OCI-LY7 (cell line): ENCODE measurements at regions of chr1 and their contacts with region 1.

Region 1: GRCh38 chr1:1605034-1605591 is 5.2 kb upstream of the FNDC10 start:
- DNase-seq: no peak
- H3K4me3 ChIP-seq: no peak overlapping the region
- H3K27ac ChIP-seq: no peak overlapping the region
- H3K4me1 ChIP-seq: peaks cover 27% of the 10 kb centered on the region
- CTCF ChIP-seq: no peak

Region 2: GRCh38 chr1:1615256-1616044 is 10.3 kb after region 1 on chr1 and contains the start of gene MIB2:
- CTCF ChIA-PET with region 1: no interaction called
- POLR2A ChIA-PET with region 1: interaction called, 4 read pairs
- intact Hi-C with region 1: loop called (anchors 1 kb)
- DNase-seq: peak; percentile 99
- H3K4me3 ChIP-seq: peak within 1 kb of the TSS; percentile 85
- H3K27ac ChIP-seq: peak within 1 kb of the TSS; percentile 87
- H3K4me1 ChIP-seq: peaks cover 26% of the 10 kb centered on the region
- CTCF ChIP-seq: no peak
- total RNA-seq, gene MIB2: 46.4 and 64.9 TPM in 2 replicates

Region 3: DNA sequence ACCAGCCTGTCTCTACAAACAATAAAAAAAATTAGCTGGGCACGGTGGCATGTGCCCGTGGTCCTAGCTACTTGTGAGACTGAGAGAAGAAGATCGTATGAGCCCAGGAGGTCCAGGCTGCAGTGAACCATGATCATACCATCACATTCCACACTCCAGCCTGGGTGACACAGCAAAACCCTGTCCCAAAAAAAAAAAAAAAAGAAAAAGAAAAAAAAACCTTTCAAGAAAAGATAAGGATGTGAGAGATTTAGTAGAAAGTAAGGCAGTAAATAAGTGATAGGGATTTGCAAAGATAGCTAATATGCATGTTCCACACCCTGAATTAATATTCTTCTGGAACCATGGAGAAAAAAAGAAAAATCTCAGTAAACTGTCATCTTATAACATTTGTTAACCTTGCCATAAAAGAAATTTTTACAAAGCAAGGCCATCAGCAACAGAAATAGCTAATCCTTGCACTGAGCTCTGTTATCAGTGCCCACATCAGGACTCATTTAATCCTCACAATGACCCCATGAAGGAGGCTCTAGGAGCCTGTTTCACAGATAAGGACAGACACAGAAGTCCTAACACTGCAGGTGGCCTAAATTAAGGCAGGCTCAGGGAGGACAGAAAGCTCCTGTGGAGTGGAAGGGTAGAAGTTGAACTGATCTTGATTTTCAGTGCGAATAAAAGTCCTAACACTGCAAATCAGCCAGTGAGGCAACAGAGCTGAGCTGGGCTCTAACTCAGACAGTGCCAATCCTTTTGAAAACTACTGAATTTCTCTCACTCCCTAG is 278.2 kb after region 1 on chr1:
- CTCF ChIA-PET with region 1: no interaction called
- POLR2A ChIA-PET with region 1: interaction called, 11 read pairs
- intact Hi-C with region 1: no loop called
- DNase-seq: no peak
- H3K4me3 ChIP-seq: no peak overlapping the region
- H3K27ac ChIP-seq: no peak overlapping the region
- H3K4me1 ChIP-seq: peaks cover 27% of the 10 kb centered on the region
- CTCF ChIP-seq: no peak

Region 4: DNA sequence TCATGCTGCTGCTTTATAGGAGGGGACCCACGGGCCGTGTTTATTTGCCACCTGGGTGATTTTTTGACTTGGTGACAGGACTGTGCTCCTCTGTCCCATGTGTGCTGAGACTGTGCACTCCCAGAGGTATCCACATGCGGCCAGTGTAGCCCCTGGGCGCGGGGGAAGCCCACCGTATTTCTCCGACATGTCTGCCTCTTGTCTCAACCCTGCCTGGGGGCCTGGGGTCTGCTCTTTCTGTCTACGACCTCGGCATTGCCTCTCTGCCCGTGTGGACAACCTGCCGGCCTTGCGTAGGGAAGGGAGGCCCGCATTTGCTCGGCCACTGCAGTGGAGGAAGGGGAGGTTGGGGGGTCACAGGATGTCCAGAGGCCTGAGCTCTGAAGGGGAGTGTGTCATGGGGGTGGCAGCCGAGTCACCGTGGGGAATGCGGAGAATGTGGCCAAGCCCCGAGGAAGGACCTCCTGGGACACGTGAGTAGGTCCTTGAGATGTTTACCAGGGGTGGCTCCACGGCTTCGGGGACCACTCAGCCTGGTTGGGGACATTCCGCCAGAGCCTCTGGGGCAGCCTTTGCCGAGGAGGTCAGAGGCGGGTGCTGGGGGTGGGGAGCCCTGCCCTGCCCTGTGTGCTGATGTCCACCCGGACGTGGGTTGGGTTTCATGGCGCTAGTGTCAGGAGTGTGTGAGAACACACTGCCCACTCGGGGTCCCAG is 456.1 kb after region 1 on chr1:
- CTCF ChIA-PET with region 1: no interaction called
- POLR2A ChIA-PET with region 1: no interaction called
- intact Hi-C with region 1: no loop called
- DNase-seq: no peak
- H3K4me3 ChIP-seq: no peak overlapping the region
- H3K27ac ChIP-seq: no peak overlapping the region
- H3K4me1 ChIP-seq: no peaks in the 10 kb centered on the region
- CTCF ChIP-seq: no peak